Ascending aorta (tissue), 2 donors: ENCODE measurements at regions of chr17 and their contacts with region 1.

Region 1: DNA sequence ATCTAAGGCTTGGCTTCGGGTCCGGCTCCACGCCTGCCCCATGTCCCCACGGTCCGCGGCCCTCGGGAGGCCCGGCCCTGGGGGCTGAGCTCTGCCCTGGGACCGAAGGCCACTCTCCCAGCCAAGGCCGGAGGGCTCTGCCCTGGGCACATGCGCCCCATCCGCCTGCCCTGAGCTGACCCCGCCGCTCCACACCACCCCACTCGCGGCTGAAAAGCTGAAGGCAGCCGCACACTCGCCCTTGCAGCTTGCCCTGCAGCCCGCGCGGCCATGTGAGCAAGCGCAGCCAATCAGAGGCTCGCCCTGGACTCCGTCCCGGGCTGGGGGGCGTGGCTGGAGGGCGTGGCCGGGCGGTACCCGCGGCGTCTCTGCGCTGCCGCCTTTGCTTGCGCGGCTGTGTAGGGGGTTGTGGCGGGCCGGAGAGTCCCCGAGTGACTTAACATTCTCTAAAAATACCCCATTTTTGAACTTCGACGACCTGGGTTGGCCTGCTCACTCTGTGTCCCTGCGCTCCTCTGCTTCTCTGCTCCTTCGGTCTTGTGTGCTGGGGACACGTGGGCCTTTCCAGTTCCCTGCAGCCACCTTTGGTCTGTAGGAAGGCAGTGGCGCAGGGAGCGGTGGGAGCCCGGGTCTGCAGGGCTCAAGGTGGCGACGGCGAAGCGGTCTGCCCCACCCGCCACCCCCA is 8.8 kb upstream of the MAP2K3 start:
- DNase-seq: peak; percentile 70 to 95
- H3K4me3 ChIP-seq: peak overlapping the region; percentile 64 to 73
- H3K27ac ChIP-seq: peak overlapping the region in 1 of 2 donors; percentile 31
- H3K4me1 ChIP-seq: peaks cover 3 to 4% of the 10 kb centered on the region in 2 donors
- H3K27me3 ChIP-seq: no peaks in the 10 kb centered on the region
- CTCF ChIP-seq: peak in 1 of 3 experiments; percentile 26

Region 2: GRCh38 chr17:21126645-21127510 is 148.8 kb before region 1 on chr17 and contains the start of gene DHRS7B:
- intact Hi-C with region 1: loop called (anchors 2 kb)
- DNase-seq: peak; percentile 79 to 97
- H3K4me3 ChIP-seq: peak within 1 kb of the TSS; percentile 81 to 85
- H3K27ac ChIP-seq: peak within 1 kb of the TSS; percentile 93 to 96
- H3K4me1 ChIP-seq: peaks cover 3 to 8% of the 10 kb centered on the region in 2 donors
- H3K27me3 ChIP-seq: no peaks in the 10 kb centered on the region
- CTCF ChIP-seq: peak in 1 of 3 experiments; percentile 4
- total RNA-seq, gene DHRS7B: 89.5 TPM

Region 3: GRCh38 chr17:21161498-21162393 is 114.0 kb before region 1 on chr17:
- intact Hi-C with region 1: loop called (anchors 5 kb)
- DNase-seq: no peak
- H3K4me3 ChIP-seq: peak overlapping the region in 1 of 2 donors; percentile 11
- H3K27ac ChIP-seq: peak overlapping the region; percentile 60 to 68
- H3K4me1 ChIP-seq: peaks cover 13 to 37% of the 10 kb centered on the region in 2 donors
- H3K27me3 ChIP-seq: no peaks in the 10 kb centered on the region
- CTCF ChIP-seq: no peak

Region 4: GRCh38 chr17:21252796-21253645 is 22.7 kb before region 1 on chr17 and contains the start of gene NATD1:
- intact Hi-C with region 1: loop called (anchors 1 kb)
- DNase-seq: peak; percentile 63 to 94
- H3K4me3 ChIP-seq: peak within 1 kb of the TSS; percentile 50 to 86
- H3K27ac ChIP-seq: peak within 1 kb of the TSS; percentile 43 to 77
- H3K4me1 ChIP-seq: peaks cover 16 to 27% of the 10 kb centered on the region in 2 donors
- H3K27me3 ChIP-seq: no peaks in the 10 kb centered on the region
- CTCF ChIP-seq: peak in 1 of 3 experiments; percentile 15
- total RNA-seq, gene NATD1: 13.4 TPM

Region 5: DNA sequence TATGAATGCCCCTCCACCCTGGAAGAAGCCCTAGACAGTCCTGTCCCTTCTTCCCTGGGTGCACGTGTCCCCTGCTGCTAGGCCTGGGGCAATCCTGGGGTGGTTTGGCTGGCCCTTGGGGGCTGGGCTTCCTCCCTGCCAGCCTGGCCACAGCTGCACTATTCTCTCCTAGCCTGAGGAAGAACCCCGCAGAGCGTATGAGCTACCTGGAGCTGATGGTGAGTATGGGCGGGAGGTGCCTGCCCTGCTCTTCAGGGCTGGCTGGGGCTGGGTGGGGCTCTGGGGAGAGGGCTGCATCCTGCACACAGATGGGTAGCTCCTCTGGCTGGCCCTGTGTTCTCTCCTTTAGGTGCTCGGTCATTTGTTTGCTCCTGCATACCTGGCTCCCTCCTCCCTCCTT is 37.6 kb after region 1 on chr17:
- intact Hi-C with region 1: loop called (anchors 5 kb)
- DNase-seq: peak in 1 of 2 donors; percentile 54
- H3K4me3 ChIP-seq: no peak overlapping the region
- H3K27ac ChIP-seq: no peak overlapping the region
- H3K4me1 ChIP-seq: peaks cover 9 to 18% of the 10 kb centered on the region in 2 donors
- H3K27me3 ChIP-seq: no peaks in the 10 kb centered on the region
- CTCF ChIP-seq: no peak

Region 6: GRCh38 chr17:21318439-21318838 is 42.7 kb after region 1 on chr17:
- intact Hi-C with region 1: loop called (anchors 2 kb)
- DNase-seq: peak in 1 of 2 donors; percentile 66
- H3K4me3 ChIP-seq: no peak overlapping the region
- H3K27ac ChIP-seq: no peak overlapping the region
- H3K4me1 ChIP-seq: peaks cover 0 to 2% of the 10 kb centered on the region in 2 donors
- H3K27me3 ChIP-seq: no peaks in the 10 kb centered on the region
- CTCF ChIP-seq: no peak

Region 7: GRCh38 chr17:21511363-21512198 is 235.9 kb after region 1 on chr17:
- intact Hi-C with region 1: loop called (anchors 1 kb)
- DNase-seq: peak; percentile 21 to 91
- H3K4me3 ChIP-seq: peak overlapping the region; percentile 70 to 74
- H3K27ac ChIP-seq: peak overlapping the region; percentile 45 to 49
- H3K4me1 ChIP-seq: peaks cover 0 to 7% of the 10 kb centered on the region in 2 donors
- H3K27me3 ChIP-seq: no peaks in the 10 kb centered on the region
- CTCF ChIP-seq: peak; percentile 35 to 81 (median 80)